Right ventricle myocardium inferior (tissue), 1 donor: ENCODE measurements at regions of chr19 and their contacts with region 1.

Region 1: DNA sequence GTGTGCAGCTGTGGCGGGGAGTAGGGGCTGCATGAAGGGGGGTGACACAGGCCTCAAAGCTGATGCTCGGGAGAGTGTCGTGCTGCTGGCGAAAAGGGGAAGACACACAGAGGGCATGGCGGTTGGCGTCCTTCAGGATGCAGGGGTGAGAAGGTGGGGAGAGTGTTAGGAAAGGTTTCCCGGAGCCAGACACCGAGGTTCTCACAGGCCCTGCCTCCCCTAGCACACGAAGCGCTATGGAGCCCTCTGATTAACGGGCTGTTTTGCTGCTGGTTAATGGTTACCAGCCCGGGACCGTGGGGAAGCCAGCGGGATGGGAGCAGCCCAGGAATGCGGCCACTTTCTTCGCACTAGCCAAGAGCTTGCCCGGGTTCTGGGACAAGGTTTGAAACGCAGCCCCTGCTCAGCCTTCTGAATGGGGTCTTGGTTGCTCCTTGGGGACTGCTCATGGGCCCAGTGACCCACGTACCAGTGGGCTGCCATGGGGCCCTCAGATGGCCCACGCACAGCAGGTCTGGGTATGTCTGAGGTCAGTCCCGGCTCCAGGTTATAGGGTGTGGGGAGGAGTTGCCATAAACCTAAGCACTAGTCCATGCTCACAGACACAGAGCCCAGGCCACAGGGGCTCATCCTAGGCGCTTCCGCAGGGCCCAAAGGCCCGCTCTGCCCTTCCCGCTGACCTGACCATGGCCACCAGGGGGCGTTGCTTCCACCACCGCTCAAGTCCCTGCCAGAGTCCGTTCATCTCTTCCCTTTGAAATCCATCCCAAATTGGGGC is 31.3 kb upstream of the ISYNA1 start:
- DNase-seq: peak; percentile 90
- ATAC-seq: peak; percentile 27

Region 2: DNA sequence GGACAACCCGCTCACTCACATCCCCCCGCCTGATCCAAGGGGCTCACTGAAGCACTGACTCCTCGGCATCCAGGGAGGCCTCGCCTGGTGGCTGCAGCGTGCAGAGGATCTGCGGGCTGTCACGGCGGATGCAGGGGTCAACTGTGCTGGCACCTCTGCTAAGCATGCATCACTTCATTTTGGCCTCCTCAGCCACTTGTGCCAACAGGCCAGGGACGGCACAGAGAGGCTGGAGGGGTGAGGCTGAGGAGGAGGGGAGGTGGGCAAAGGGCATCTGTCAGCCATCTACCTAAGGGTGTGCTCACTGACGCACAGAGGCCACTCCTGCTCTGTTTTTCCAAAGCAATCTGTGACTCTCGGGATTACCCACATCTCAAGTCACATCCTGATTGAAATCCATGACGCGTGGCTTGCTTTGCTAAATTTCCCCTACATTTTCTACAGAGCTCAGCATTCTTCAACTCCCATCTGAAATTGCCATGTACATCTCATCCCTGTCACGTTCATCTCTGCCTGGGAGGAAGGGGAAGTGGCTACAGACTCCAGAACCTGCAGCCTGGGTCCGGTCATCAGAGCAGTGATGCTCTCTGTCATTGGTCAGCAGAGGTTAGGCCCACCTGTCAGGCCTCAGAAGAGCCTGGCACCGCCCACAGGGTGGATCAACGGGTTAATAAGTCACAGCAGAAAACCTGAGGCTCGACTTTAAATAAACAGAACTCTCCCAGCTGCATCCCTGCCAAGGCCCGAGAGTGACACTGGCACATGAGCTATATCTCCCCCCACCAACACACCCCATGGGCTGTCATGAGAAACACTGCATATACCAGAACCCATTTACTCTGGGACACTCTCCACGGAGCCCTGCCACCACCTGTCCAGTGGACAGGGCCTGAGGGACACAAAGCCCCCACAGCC is 35.0 kb after region 1 on chr19:
- intact Hi-C with region 1: loop called (anchors 5 kb)
- DNase-seq: peak; percentile 60
- ATAC-seq: no peak

Region 3: GRCh38 chr19:18571564-18572300 is 102.5 kb after region 1 on chr19 and contains the start of gene UBA52:
- intact Hi-C with region 1: loop called (anchors 5 kb)
- DNase-seq: peak; percentile 98
- ATAC-seq: peak; percentile 96
- total RNA-seq, gene UBA52: 737 TPM